Natural killer cell (primary cell): ENCODE measurements at regions of chr1 and their contacts with region 1.

Region 1: GRCh38 chr1:164786980-164787833 is 228.2 kb downstream of the PBX1 start:
- DNase-seq: peak; percentile 63 to 64
- ATAC-seq: peak; percentile 83 to 98 (median 85)
- H3K4me3 ChIP-seq: no peak overlapping the region
- H3K4me3 Mint-ChIP-seq: no peak overlapping the region
- H3K27ac ChIP-seq: no peak overlapping the region
- H3K27ac Mint-ChIP-seq: no peak overlapping the region
- H3K4me1 ChIP-seq: peaks cover 6% of the 10 kb centered on the region
- H3K4me1 Mint-ChIP-seq: peaks cover 3 to 7% of the 10 kb centered on the region in 2 donors
- H3K27me3 ChIP-seq: peaks cover 9% of the 10 kb centered on the region
- H3K27me3 Mint-ChIP-seq: peaks cover 39 to 80% of the 10 kb centered on the region in 2 donors
- CTCF ChIP-seq: peak; percentile 77

Region 2: DNA sequence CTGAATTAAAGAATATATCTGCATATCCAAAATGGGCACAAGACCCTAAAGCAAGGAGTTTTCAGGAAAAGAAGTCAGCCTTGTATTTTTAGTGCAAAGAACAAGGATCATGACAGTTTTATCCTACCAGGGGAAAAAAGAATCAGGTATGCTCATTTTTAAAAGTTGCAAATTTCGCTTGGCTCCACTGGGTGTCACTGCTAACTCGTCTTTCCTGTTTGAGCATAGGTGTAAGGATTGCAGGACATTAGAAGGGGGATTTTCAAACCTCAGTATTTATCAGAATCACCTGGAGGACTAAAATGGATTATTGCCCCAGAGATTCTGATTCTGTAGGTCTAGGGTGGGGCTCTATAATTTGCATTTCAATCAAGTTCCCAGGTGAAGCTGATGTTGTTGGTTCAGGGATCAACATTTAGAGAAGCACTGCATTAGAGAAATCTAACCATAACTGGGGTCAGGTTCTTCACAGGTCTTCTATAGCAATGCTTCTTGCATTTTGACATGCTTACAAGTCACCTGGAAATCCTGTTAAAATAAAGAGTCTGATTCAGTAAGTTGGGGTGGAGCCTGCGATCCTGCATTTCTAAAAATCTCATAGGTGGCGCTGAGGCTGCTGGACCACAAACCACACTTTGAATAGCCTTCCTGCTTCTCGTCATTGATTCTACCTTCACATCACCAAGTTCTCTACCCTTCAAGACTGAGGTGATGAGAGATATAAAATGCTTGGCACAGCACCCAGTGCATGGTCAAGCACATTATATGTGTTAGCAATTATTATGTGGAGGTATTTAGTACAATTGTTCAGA is 1425.9 kb before region 1 on chr1:
- intact Hi-C with region 1: loop called (anchors 2 kb)
- DNase-seq: peak in 1 of 2 donors; percentile 9
- ATAC-seq: peak in 1 of 3 donors; percentile 32
- H3K4me3 ChIP-seq: no peak overlapping the region
- H3K4me3 Mint-ChIP-seq: no peak overlapping the region
- H3K27ac ChIP-seq: no peak overlapping the region
- H3K27ac Mint-ChIP-seq: no peak overlapping the region
- H3K4me1 ChIP-seq: no peaks in the 10 kb centered on the region
- H3K4me1 Mint-ChIP-seq: peaks cover 7 to 8% of the 10 kb centered on the region in 2 donors
- H3K27me3 ChIP-seq: peaks cover 3% of the 10 kb centered on the region
- H3K27me3 Mint-ChIP-seq: peaks cover 3 to 26% of the 10 kb centered on the region in 2 donors
- CTCF ChIP-seq: no peak

Region 3: GRCh38 chr1:163410073-163410999 is 1376.9 kb before region 1 on chr1:
- intact Hi-C with region 1: loop called (anchors 1 kb)
- DNase-seq: peak in 1 of 2 donors; percentile 38
- ATAC-seq: peak in 1 of 3 donors; percentile 36
- H3K4me3 ChIP-seq: no peak overlapping the region
- H3K4me3 Mint-ChIP-seq: no peak overlapping the region
- H3K27ac ChIP-seq: no peak overlapping the region
- H3K27ac Mint-ChIP-seq: no peak overlapping the region
- H3K4me1 ChIP-seq: no peaks in the 10 kb centered on the region
- H3K4me1 Mint-ChIP-seq: peaks cover 0 to 6% of the 10 kb centered on the region in 2 donors
- H3K27me3 ChIP-seq: no peaks in the 10 kb centered on the region
- H3K27me3 Mint-ChIP-seq: peaks cover 0 to 5% of the 10 kb centered on the region in 2 donors
- CTCF ChIP-seq: peak; percentile 69

Region 4: GRCh38 chr1:163528710-163529348 is 1258.4 kb before region 1 on chr1:
- intact Hi-C with region 1: loop called (anchors 2 kb)
- DNase-seq: no peak
- ATAC-seq: no peak
- H3K4me3 ChIP-seq: no peak overlapping the region
- H3K4me3 Mint-ChIP-seq: no peak overlapping the region
- H3K27ac ChIP-seq: no peak overlapping the region
- H3K27ac Mint-ChIP-seq: no peak overlapping the region
- H3K4me1 ChIP-seq: no peaks in the 10 kb centered on the region
- H3K4me1 Mint-ChIP-seq: no peaks in the 10 kb centered on the region
- H3K27me3 ChIP-seq: no peaks in the 10 kb centered on the region
- H3K27me3 Mint-ChIP-seq: no peaks in the 10 kb centered on the region
- CTCF ChIP-seq: peak; percentile 29

Region 5: GRCh38 chr1:165025805-165026204 is 238.6 kb after region 1 on chr1:
- intact Hi-C with region 1: no loop called
- DNase-seq: no peak
- ATAC-seq: no peak
- H3K4me3 ChIP-seq: no peak overlapping the region
- H3K4me3 Mint-ChIP-seq: no peak overlapping the region
- H3K27ac ChIP-seq: no peak overlapping the region
- H3K27ac Mint-ChIP-seq: no peak overlapping the region
- H3K4me1 ChIP-seq: no peaks in the 10 kb centered on the region
- H3K4me1 Mint-ChIP-seq: no peaks in the 10 kb centered on the region
- H3K27me3 ChIP-seq: no peaks in the 10 kb centered on the region
- H3K27me3 Mint-ChIP-seq: peaks cover 0 to 7% of the 10 kb centered on the region in 2 donors
- CTCF ChIP-seq: no peak